Psoas muscle (tissue), 8 donors: ENCODE measurements at regions of chr1 and their contacts with region 1.

Region 1: GRCh38 chr1:234683861-234684632 is 74.1 kb upstream of the IRF2BP2 start:
- DNase-seq: peak; percentile 63 to 77
- ATAC-seq: peak; percentile 99 to 100 (median 99)
- H3K4me3 ChIP-seq: no peak overlapping the region
- H3K27ac ChIP-seq: peak overlapping the region; percentile 73
- H3K4me1 ChIP-seq: peaks cover 13% of the 10 kb centered on the region
- H3K27me3 ChIP-seq: no peaks in the 10 kb centered on the region
- CTCF ChIP-seq: no peak

Region 2: GRCh38 chr1:234617131-234617985 is 66.7 kb before region 1 on chr1:
- intact Hi-C with region 1: loop called in 1 of 2 experiments (anchors 5 kb)
- DNase-seq: no peak
- ATAC-seq: no peak
- H3K4me3 ChIP-seq: no peak overlapping the region
- H3K27ac ChIP-seq: peak overlapping the region; percentile 70
- H3K4me1 ChIP-seq: peaks cover 73% of the 10 kb centered on the region
- H3K27me3 ChIP-seq: no peaks in the 10 kb centered on the region
- CTCF ChIP-seq: no peak

Region 3: GRCh38 chr1:234628089-234628488 is 56.0 kb before region 1 on chr1:
- intact Hi-C with region 1: loop called in 1 of 2 experiments (anchors 5 kb)
- DNase-seq: no peak
- ATAC-seq: no peak
- H3K4me3 ChIP-seq: no peak overlapping the region
- H3K27ac ChIP-seq: no peak overlapping the region
- H3K4me1 ChIP-seq: peaks cover 12% of the 10 kb centered on the region
- H3K27me3 ChIP-seq: no peaks in the 10 kb centered on the region
- CTCF ChIP-seq: no peak